ENCODE measurements at regions of chr16 and their contacts with region 1.

Region 1: DNA sequence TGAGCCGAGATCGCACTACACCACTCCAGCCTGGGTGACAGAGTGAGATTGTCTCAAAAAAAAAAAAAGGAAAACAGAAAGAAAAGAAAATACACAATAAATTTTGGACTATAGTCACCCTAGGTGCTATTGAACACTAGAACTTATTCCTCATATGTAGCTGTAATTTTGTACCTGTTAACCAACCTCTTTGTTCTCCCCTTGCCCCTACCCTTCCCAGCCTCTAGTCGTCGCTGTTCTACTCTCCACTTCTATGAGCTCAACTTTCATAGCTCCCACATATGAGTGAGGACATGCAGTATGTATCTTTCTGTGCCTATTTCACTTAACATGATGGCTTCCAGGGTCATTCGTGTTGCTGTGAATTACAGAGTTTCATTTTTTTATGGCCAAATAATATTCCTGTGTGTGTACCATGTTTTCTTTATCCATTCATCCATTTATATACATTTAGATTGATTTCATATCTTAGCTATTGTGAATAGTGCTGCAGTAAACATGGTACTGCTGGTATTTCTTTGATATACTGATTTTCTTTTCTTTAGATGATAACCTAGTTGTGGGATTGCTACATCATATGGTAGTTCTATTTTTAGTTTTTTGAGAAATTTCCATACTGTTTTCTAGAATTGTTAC is 28.3 kb downstream of the VPS35L start:
- DNase-seq: peak; percentile 10 to 35 (median 13)
- H3K4me3 ChIP-seq: no peak overlapping the region
- H3K4me3 Mint-ChIP-seq: no peak overlapping the region
- H3K27ac ChIP-seq: no peak overlapping the region
- H3K27ac Mint-ChIP-seq: peak overlapping the region in 4 of 7 donors; percentile 15 to 39 (median 31)
- H3K4me1 ChIP-seq: no peaks in the 10 kb centered on the region
- H3K4me1 Mint-ChIP-seq: peaks cover 6% of the 10 kb centered on the region
- H3K27me3 ChIP-seq: no peaks in the 10 kb centered on the region
- H3K27me3 Mint-ChIP-seq: peaks cover 0 to 1% (median 0%) of the 10 kb centered on the region in 3 donors
- CTCF ChIP-seq: peak; percentile 78

Region 2: DNA sequence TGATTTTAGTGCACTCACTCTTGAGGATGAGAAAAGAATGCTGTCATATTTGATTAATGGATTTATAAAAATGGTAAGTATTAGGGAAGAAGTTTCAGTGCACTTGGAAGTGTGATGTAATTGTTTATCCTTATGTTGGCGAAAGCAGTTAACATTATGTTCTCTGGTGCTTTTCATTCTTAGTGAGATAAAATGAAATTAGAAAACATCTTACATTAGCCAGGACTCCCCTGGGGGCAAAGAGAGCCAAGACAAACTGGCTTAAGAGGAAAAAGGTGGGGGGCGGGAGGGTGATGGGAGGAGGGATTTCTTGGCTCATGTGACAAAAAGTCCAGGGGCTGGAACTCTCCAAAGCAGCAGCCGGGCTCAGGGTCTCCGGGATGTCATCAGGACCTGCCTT is 61.1 kb after region 1 on chr16:
- intact Hi-C with region 1: loop called in 1 of 2 experiments (anchors 5 kb)
- DNase-seq: no peak
- H3K4me3 ChIP-seq: no peak overlapping the region
- H3K4me3 Mint-ChIP-seq: no peak overlapping the region
- H3K27ac ChIP-seq: no peak overlapping the region
- H3K27ac Mint-ChIP-seq: no peak overlapping the region
- H3K4me1 ChIP-seq: no peaks in the 10 kb centered on the region
- H3K4me1 Mint-ChIP-seq: no peaks in the 10 kb centered on the region
- H3K27me3 ChIP-seq: no peaks in the 10 kb centered on the region
- H3K27me3 Mint-ChIP-seq: no peaks in the 10 kb centered on the region
- CTCF ChIP-seq: no peak

Region 3: GRCh38 chr16:19817122-19817521 is 233.3 kb after region 1 on chr16:
- intact Hi-C with region 1: no loop called
- DNase-seq: no peak
- H3K4me3 ChIP-seq: no peak overlapping the region
- H3K4me3 Mint-ChIP-seq: no peak overlapping the region
- H3K27ac ChIP-seq: no peak overlapping the region
- H3K27ac Mint-ChIP-seq: no peak overlapping the region
- H3K4me1 ChIP-seq: no peaks in the 10 kb centered on the region
- H3K4me1 Mint-ChIP-seq: no peaks in the 10 kb centered on the region
- H3K27me3 ChIP-seq: no peaks in the 10 kb centered on the region
- H3K27me3 Mint-ChIP-seq: no peaks in the 10 kb centered on the region
- CTCF ChIP-seq: no peak